ENCODE measurements at regions of chr16 and their contacts with region 1.

Region 1: GRCh38 chr16:4586291-4586690 is 28.4 kb downstream of the UBALD1 start:
- DNase-seq: no peak
- H3K4me3 ChIP-seq: no peak overlapping the region
- H3K27ac ChIP-seq: no peak overlapping the region
- H3K4me1 ChIP-seq: peaks cover 0 to 2% (median 0%) of the 10 kb centered on the region in 4 experiments
- H3K27me3 ChIP-seq: peaks cover 0 to 11% (median 0%) of the 10 kb centered on the region in 5 experiments

Region 2: DNA sequence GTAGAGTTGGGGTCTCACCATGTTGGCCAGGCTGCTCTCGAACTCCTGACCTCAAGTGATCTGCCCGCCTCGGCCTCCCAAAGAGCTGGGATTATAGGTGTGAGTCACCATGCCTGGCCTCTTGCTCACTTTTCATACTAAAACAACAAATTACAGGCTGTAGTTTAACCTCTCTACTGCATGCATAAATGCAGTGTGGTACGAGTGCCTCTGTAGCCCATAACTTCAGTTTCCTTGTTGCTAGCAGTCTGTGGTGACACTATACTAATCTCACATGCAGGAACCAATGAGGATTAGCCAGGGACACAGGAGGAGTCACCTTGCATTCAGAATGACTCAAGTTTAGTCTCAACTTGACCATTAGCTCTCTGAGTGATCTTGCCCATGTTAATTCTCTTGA is 90.0 kb before region 1 on chr16:
- CTCF ChIA-PET with region 1: no interaction called
- POLR2A ChIA-PET with region 1: no interaction called
- DNase-seq: no peak
- H3K4me3 ChIP-seq: no peak overlapping the region
- H3K27ac ChIP-seq: no peak overlapping the region
- H3K4me1 ChIP-seq: no peaks in the 10 kb centered on the region
- H3K27me3 ChIP-seq: no peaks in the 10 kb centered on the region

Region 3: DNA sequence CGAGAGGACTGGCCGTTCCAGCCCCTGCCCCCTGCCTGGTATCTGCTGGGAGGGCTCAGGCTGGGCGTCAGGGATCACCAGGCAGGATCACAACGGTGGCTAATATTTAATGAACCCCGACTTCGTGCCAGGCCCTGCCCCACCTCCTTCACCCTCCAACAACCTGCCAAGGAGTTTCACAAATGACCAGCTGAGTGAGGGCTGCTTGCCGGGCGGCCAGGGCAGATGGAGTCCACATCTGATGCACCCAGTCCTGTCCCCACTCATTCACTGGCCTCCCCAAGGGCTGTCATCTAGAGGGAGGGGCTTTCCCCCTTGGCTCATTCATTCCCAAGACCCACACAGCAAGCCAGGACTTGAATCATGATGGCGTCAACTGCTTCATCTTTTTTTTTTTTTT is 10.9 kb after region 1 on chr16:
- CTCF ChIA-PET with region 1: interaction called, 12 read pairs
- POLR2A ChIA-PET with region 1: no interaction called
- DNase-seq: no peak
- H3K4me3 ChIP-seq: no peak overlapping the region
- H3K27ac ChIP-seq: no peak overlapping the region
- H3K4me1 ChIP-seq: peaks cover 0 to 8% (median 4%) of the 10 kb centered on the region in 4 experiments
- H3K27me3 ChIP-seq: no peaks in the 10 kb centered on the region

Measured in common myeloid progenitor, CD34-positive (primary cell).